PC-9 (cell line): ENCODE measurements at regions of chr18 and their contacts with region 1.

Region 1: GRCh38 chr18:8800449-8800848 is 95.1 kb downstream of the MTCL1 start:
- DNase-seq: peak; percentile 79 to 98
- H3K4me3 ChIP-seq: peak overlapping the region; percentile 41; the same call in 1 of the 2 replicates
- H3K27ac ChIP-seq: peak overlapping the region; percentile 97
- H3K4me1 ChIP-seq: peaks cover 76% of the 10 kb centered on the region
- H3K27me3 ChIP-seq: no peaks in the 10 kb centered on the region
- CTCF ChIP-seq: no peak

Region 2: GRCh38 chr18:8704361-8705279 is 95.8 kb before region 1 on chr18:
- CTCF ChIA-PET with region 1: no interaction called
- POLR2A ChIA-PET with region 1: interaction called, 16 read pairs
- intact Hi-C with region 1: loop called (anchors 1 kb)
- DNase-seq: peak; percentile 69 to 96
- H3K4me3 ChIP-seq: peak overlapping the region; percentile 76
- H3K27ac ChIP-seq: peak overlapping the region; percentile 51
- H3K4me1 ChIP-seq: peaks cover 21% of the 10 kb centered on the region
- H3K27me3 ChIP-seq: no peaks in the 10 kb centered on the region
- CTCF ChIP-seq: no peak

Region 3: GRCh38 chr18:8844721-8845148 is 44.3 kb after region 1 on chr18:
- CTCF ChIA-PET with region 1: interaction called, 3 read pairs
- POLR2A ChIA-PET with region 1: interaction called, 4 read pairs
- intact Hi-C with region 1: loop called (anchors 5 kb)
- DNase-seq: no peak
- H3K4me3 ChIP-seq: no peak overlapping the region
- H3K27ac ChIP-seq: no peak overlapping the region
- H3K4me1 ChIP-seq: peaks cover 5% of the 10 kb centered on the region; the same call in 1 of the 2 replicates
- H3K27me3 ChIP-seq: no peaks in the 10 kb centered on the region
- CTCF ChIP-seq: no peak

Region 4: DNA sequence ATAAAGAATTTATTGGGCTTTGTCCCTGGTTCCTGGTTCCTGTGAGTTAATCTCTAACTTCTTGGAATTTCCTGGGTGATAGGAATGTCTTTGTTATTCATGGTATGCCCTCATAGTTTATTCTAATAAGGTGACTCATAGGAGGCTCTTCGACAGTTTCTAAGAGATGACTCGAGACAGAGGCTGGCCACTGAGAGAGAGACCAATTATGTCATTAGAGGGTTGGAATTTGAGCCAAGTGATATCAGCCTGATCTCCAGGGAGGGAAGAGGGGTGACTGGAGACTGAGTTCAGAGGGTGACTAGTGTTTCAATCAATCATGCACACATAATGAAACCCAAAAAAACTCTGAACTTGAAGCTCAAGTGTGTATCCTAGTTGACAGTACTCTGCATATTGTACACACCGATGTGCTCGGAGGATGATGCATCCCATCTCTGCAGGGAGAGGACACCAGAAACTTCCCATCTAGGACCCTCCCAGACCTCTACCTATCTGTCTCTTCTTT is 90.6 kb after region 1 on chr18:
- CTCF ChIA-PET with region 1: no interaction called
- POLR2A ChIA-PET with region 1: no interaction called
- intact Hi-C with region 1: loop called (anchors 1 kb)
- DNase-seq: peak; percentile 79 to 99
- H3K4me3 ChIP-seq: no peak overlapping the region
- H3K27ac ChIP-seq: peak overlapping the region; percentile 51
- H3K4me1 ChIP-seq: peaks cover 17% of the 10 kb centered on the region
- H3K27me3 ChIP-seq: no peaks in the 10 kb centered on the region
- CTCF ChIP-seq: no peak

Region 5: GRCh38 chr18:8937160-8938094 is 137.0 kb after region 1 on chr18:
- CTCF ChIA-PET with region 1: no interaction called
- POLR2A ChIA-PET with region 1: no interaction called
- intact Hi-C with region 1: loop called (anchors 2 kb)
- DNase-seq: peak; percentile 59 to 94
- H3K4me3 ChIP-seq: no peak overlapping the region; the same call in 1 of the 2 replicates
- H3K27ac ChIP-seq: peak overlapping the region; percentile 57
- H3K4me1 ChIP-seq: peaks cover 36% of the 10 kb centered on the region
- H3K27me3 ChIP-seq: no peaks in the 10 kb centered on the region
- CTCF ChIP-seq: no peak

Region 6: DNA sequence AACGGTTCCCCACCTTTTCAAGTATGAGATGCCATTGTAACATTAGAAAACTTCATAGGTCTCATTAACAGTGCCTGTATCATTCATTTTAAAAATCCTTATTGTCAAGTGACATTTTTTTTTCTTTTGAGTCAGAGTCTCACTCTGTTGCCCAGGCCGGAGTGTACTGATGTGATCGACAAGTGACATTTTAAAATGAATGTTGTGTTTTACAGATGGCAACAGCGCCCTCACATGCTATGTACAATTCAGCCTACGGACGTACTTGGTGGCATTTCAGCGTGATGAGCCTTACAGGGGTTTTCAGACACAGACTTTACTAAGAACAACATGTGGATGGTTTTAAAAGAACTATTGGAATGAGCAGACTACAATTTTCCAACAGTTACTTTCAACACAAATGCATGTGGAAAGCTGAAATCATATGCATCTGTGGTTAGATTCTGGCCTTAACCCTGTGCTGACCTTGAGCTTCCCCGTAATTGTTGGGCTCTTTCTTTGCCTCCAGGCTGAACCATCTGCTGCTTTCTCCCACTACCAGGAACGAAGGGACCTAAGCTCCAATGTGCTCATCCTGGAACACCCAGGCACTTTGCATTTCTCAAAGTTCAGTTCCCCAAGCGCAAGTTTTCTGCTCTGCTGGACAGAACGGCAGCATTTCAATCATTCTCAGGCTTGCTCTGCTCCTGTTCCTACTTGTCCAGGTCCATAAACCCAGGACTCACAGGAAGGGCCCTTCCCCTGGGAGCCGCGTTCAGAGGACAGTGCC is 182.2 kb after region 1 on chr18:
- CTCF ChIA-PET with region 1: interaction called, 6 read pairs
- POLR2A ChIA-PET with region 1: no interaction called
- intact Hi-C with region 1: loop called (anchors 1 kb)
- DNase-seq: peak in 1 of 2 experiments; percentile 59
- H3K4me3 ChIP-seq: no peak overlapping the region
- H3K27ac ChIP-seq: no peak overlapping the region
- H3K4me1 ChIP-seq: no peaks in the 10 kb centered on the region
- H3K27me3 ChIP-seq: no peaks in the 10 kb centered on the region
- CTCF ChIP-seq: peak; percentile 68

Region 7: GRCh38 chr18:9048808-9049494 is 248.5 kb after region 1 on chr18:
- CTCF ChIA-PET with region 1: no interaction called
- POLR2A ChIA-PET with region 1: no interaction called
- intact Hi-C with region 1: no loop called
- DNase-seq: no peak
- H3K4me3 ChIP-seq: no peak overlapping the region
- H3K27ac ChIP-seq: no peak overlapping the region
- H3K4me1 ChIP-seq: no peaks in the 10 kb centered on the region
- H3K27me3 ChIP-seq: no peaks in the 10 kb centered on the region
- CTCF ChIP-seq: no peak